CD4-positive, alpha-beta memory T cell (primary cell): ENCODE measurements at regions of chr6 and their contacts with region 1.

Region 1: GRCh38 chr6:36885461-36886401 is at the start of gene C6orf89:
- DNase-seq: peak; percentile 95 to 98 (median 97)
- H3K4me3 ChIP-seq: peak within 1 kb of the TSS; percentile 71 to 84
- H3K4me3 Mint-ChIP-seq: peak within 1 kb of the TSS; percentile 82 to 93 (median 90)
- H3K27ac ChIP-seq: peak within 1 kb of the TSS; percentile 85
- H3K27ac Mint-ChIP-seq: peak within 1 kb of the TSS; percentile 94 to 98 (median 96)
- H3K4me1 ChIP-seq: peaks cover 50% of the 10 kb centered on the region
- H3K4me1 Mint-ChIP-seq: peaks cover 23 to 51% (median 39%) of the 10 kb centered on the region in 4 donors
- H3K27me3 ChIP-seq: no peaks in the 10 kb centered on the region
- H3K27me3 Mint-ChIP-seq: no peaks in the 10 kb centered on the region
- total RNA-seq, gene C6orf89: 53.0 to 56.0 TPM

Region 2: DNA sequence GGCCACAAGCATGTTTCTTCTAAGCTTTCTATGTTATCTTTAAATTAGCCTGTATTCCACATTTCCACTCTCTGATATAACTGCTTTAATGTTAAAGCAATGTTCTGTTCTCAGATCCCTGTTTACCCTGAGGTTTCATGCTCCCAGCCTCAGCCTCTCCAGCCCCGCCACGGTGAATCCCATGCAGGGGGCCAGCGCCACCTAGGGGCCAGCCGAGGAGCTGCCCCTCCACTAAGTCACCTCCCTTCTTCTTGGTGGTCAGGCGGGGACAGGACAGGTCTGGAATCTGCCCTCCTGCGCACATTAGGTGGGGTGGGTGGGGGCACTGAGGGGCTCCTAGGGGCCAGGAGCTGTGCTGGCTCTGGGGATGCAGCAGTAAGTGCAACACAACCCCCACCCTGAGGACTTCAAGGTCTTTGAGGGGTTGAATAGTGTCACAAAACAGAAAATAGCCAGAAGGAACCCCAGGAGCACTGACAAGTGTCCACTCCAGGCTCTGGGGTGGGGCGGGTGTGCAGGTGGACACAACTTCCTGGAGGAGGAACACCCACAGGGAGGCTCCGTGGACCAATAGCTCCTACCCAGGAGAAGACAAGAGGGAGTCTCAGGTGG is 126.5 kb before region 1 on chr6:
- CTCF ChIA-PET with region 1: no interaction called
- POLR2A ChIA-PET with region 1: no interaction called
- intact Hi-C with region 1: no loop called
- DNase-seq: peak; percentile 71 to 77 (median 76)
- H3K4me3 ChIP-seq: no peak overlapping the region
- H3K4me3 Mint-ChIP-seq: peak overlapping the region in 1 of 8 donors; percentile 47
- H3K27ac ChIP-seq: no peak overlapping the region
- H3K27ac Mint-ChIP-seq: peak overlapping the region; percentile 37 to 96 (median 86)
- H3K4me1 ChIP-seq: peaks cover 43% of the 10 kb centered on the region
- H3K4me1 Mint-ChIP-seq: peaks cover 39 to 50% (median 44%) of the 10 kb centered on the region in 4 donors
- H3K27me3 ChIP-seq: no peaks in the 10 kb centered on the region
- H3K27me3 Mint-ChIP-seq: no peaks in the 10 kb centered on the region

Region 3: GRCh38 chr6:36874443-36875249 is 11.1 kb before region 1 on chr6 and contains the start of gene PPIL1:
- CTCF ChIA-PET with region 1: interaction called, 88 read pairs
- POLR2A ChIA-PET with region 1: interaction called, 69 read pairs
- intact Hi-C with region 1: loop called (anchors 1 kb)
- DNase-seq: peak; percentile 91 to 94 (median 92)
- H3K4me3 ChIP-seq: peak within 1 kb of the TSS; percentile 95 to 96
- H3K4me3 Mint-ChIP-seq: peak within 1 kb of the TSS; percentile 95 to 100 (median 98)
- H3K27ac ChIP-seq: peak within 1 kb of the TSS; percentile 87
- H3K27ac Mint-ChIP-seq: peak within 1 kb of the TSS; percentile 91 to 100 (median 98)
- H3K4me1 ChIP-seq: peaks cover 23% of the 10 kb centered on the region
- H3K4me1 Mint-ChIP-seq: peaks cover 22 to 37% (median 31%) of the 10 kb centered on the region in 4 donors
- H3K27me3 ChIP-seq: no peaks in the 10 kb centered on the region
- H3K27me3 Mint-ChIP-seq: peaks cover 0 to 1% of the 10 kb centered on the region in 2 donors
- total RNA-seq, gene PPIL1: 8.4 to 9.2 TPM

Region 4: DNA sequence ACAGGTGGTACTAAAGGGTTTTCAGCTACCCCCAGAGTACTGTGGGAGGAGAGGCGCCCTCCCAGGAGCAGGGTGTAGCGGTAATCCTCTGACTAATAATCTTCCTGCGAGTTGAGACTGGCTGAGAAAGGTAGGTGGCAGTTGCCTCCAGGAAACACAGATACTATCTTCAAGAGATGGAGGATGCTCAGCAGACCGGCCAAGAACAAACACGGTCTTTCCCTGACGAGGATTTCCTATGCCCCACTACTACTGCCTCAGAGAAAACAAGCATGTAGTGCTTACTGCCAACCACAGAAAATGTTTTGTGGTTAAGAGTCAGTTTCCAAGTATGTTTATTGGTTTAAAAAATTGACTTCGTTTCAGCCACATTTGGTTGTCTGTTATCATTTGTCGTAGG is 26.9 kb after region 1 on chr6:
- CTCF ChIA-PET with region 1: interaction called, 20 read pairs
- POLR2A ChIA-PET with region 1: interaction called, 24 read pairs
- intact Hi-C with region 1: loop called (anchors 1 kb)
- DNase-seq: peak; percentile 76 to 90 (median 82)
- H3K4me3 ChIP-seq: peak overlapping the region; percentile 8 to 22
- H3K4me3 Mint-ChIP-seq: peak overlapping the region; percentile 63 to 85 (median 78)
- H3K27ac ChIP-seq: peak overlapping the region; percentile 58
- H3K27ac Mint-ChIP-seq: peak overlapping the region; percentile 87 to 97 (median 94)
- H3K4me1 ChIP-seq: peaks cover 42% of the 10 kb centered on the region
- H3K4me1 Mint-ChIP-seq: peaks cover 26 to 49% (median 34%) of the 10 kb centered on the region in 4 donors
- H3K27me3 ChIP-seq: no peaks in the 10 kb centered on the region
- H3K27me3 Mint-ChIP-seq: no peaks in the 10 kb centered on the region

Region 5: DNA sequence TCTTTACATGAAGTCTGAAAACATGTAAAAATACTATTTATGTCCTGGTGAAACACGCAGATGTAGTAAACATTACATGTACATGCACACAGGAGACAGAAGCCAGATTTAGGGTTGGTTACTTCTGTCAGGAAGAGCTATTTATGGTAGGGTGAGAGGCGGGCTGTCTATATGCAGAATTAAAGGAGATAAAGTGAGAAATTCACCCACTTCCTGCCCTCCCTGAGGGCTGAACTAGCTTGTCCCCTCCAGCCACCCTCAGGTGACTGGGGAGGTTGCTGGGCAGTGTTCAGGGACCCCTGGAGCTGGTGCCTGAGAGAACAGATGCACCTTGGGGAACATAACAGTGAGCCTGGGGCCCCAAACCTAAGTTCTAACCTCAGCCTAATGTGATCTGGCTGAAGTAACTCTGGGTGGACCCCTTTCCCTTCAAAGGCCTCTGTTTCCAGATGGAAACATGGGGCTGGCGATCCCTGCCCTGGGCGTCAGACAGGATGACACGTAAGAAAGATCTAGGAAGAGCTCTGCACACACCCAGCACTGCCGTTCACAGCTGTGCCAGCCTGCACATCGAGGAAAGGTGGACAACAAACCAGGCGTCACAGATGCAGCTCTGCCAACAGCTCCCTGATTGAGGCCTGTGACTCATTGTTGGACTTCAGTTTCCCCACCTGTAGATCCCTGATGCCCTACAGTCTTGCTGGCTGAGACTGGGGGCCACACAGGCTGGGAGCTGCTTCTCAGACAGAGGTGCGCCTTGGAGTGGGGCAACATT is 70.1 kb after region 1 on chr6:
- CTCF ChIA-PET with region 1: interaction called, 21 read pairs
- POLR2A ChIA-PET with region 1: interaction called, 7 read pairs
- intact Hi-C with region 1: no loop called
- DNase-seq: no peak
- H3K4me3 ChIP-seq: peak overlapping the region; percentile 5 to 35
- H3K4me3 Mint-ChIP-seq: peak overlapping the region; percentile 83 to 93 (median 88)
- H3K27ac ChIP-seq: peak overlapping the region; percentile 33
- H3K27ac Mint-ChIP-seq: peak overlapping the region; percentile 70 to 94 (median 88)
- H3K4me1 ChIP-seq: peaks cover 64% of the 10 kb centered on the region
- H3K4me1 Mint-ChIP-seq: peaks cover 45 to 62% (median 54%) of the 10 kb centered on the region in 4 donors
- H3K27me3 ChIP-seq: no peaks in the 10 kb centered on the region
- H3K27me3 Mint-ChIP-seq: no peaks in the 10 kb centered on the region

Region 6: GRCh38 chr6:36962874-36963273 is 77.1 kb after region 1 on chr6:
- CTCF ChIA-PET with region 1: interaction called, 6 read pairs
- POLR2A ChIA-PET with region 1: interaction called, 12 read pairs
- intact Hi-C with region 1: loop called (anchors 1 kb)
- DNase-seq: peak; percentile 83 to 90 (median 85)
- H3K4me3 ChIP-seq: no peak overlapping the region
- H3K4me3 Mint-ChIP-seq: peak overlapping the region; percentile 49 to 87 (median 71)
- H3K27ac ChIP-seq: peak overlapping the region; percentile 55
- H3K27ac Mint-ChIP-seq: peak overlapping the region; percentile 90 to 98 (median 94)
- H3K4me1 ChIP-seq: peaks cover 55% of the 10 kb centered on the region
- H3K4me1 Mint-ChIP-seq: peaks cover 33 to 64% (median 50%) of the 10 kb centered on the region in 4 donors
- H3K27me3 ChIP-seq: no peaks in the 10 kb centered on the region
- H3K27me3 Mint-ChIP-seq: no peaks in the 10 kb centered on the region

Region 7: DNA sequence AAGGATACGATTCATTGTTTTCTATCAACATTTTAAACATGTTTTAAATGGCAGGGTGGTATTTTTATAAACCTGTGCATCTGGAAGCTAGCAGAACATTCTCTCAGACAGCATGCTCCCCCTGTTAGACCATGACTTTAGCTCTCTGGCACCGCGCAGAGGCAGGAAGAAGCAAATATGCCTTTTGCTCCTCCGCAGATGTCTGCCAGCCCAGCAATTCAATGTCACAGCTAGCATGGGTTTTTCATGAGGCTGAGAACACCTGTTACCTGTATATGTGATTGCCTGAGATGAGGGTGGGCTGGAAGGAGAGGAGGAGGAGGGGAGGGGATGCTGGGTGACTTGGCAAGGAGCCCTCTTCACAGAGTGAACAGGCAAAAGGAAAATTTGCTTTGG is 93.6 kb after region 1 on chr6:
- CTCF ChIA-PET with region 1: interaction called, 18 read pairs
- POLR2A ChIA-PET with region 1: interaction called, 5 read pairs
- intact Hi-C with region 1: loop called (anchors 1 kb)
- DNase-seq: peak in 4 of 5 donors; percentile 28 to 48 (median 34)
- H3K4me3 ChIP-seq: no peak overlapping the region
- H3K4me3 Mint-ChIP-seq: peak overlapping the region in 3 of 8 donors; percentile 14 to 49 (median 20)
- H3K27ac ChIP-seq: no peak overlapping the region
- H3K27ac Mint-ChIP-seq: peak overlapping the region; percentile 24 to 86 (median 64)
- H3K4me1 ChIP-seq: peaks cover 36% of the 10 kb centered on the region
- H3K4me1 Mint-ChIP-seq: peaks cover 24 to 37% (median 25%) of the 10 kb centered on the region in 4 donors
- H3K27me3 ChIP-seq: no peaks in the 10 kb centered on the region
- H3K27me3 Mint-ChIP-seq: no peaks in the 10 kb centered on the region

Region 8: GRCh38 chr6:37257634-37258404 is 372.1 kb after region 1 on chr6 and contains the starts of genes TBC1D22B and TMEM217:
- CTCF ChIA-PET with region 1: interaction called, 3 read pairs
- POLR2A ChIA-PET with region 1: interaction called, 3 read pairs
- intact Hi-C with region 1: loop called (anchors 1 kb)
- DNase-seq: peak; percentile 93 to 96 (median 93)
- H3K4me3 ChIP-seq: peak within 1 kb of the TSS; percentile 55 to 93
- H3K4me3 Mint-ChIP-seq: peak within 1 kb of the TSS; percentile 86 to 96 (median 92)
- H3K27ac ChIP-seq: peak within 1 kb of the TSS; percentile 97
- H3K27ac Mint-ChIP-seq: peak within 1 kb of the TSS; percentile 87 to 97 (median 92)
- H3K4me1 ChIP-seq: peaks cover 38% of the 10 kb centered on the region
- H3K4me1 Mint-ChIP-seq: peaks cover 25 to 59% (median 38%) of the 10 kb centered on the region in 4 donors
- H3K27me3 ChIP-seq: no peaks in the 10 kb centered on the region
- H3K27me3 Mint-ChIP-seq: no peaks in the 10 kb centered on the region
- total RNA-seq, gene TBC1D22B: 9.7 to 10.3 TPM
- total RNA-seq, gene TMEM217: 1.4 TPM in 1 of 2 experiments, not detected in the other